ENCODE measurements at regions of chr1 and their contacts with region 1.

Region 1: DNA sequence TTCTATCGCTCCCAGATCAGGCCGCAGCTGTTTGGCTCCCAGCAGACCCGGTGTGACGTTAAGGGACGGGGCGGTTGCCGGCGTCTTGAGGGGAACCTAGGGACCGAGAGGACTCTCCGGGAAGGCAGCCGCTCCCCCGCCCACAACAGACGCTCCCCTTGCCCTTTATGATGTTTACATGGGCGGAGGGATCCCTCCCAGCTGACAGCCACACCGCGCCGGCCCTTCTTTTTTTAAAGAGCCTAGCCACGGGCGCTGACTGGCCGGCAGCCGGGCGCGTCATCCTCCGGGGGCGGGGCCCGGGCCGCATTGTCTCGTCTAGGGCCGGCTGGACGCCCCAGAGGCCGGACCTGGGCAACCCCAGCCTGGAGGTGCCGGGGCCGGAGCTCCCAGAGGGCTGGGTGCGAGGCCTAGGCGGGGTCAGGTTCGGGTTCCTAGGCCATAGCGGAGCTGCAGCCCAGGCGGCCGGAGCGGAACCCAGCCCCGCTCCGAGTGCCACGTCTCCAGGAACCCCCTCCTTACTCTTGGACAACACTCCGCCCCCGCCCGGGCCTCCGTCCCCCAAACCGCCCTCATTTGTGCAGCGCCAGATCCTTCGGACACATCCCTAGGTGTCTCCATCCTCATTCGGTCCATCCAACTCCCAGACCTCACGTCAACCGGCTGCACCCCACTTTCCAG is at the start of gene PCAT6:
- DNase-seq: peak; percentile 99
- H3K4me3 Mint-ChIP-seq: peak within 1 kb of the TSS; percentile 81
- H3K27ac Mint-ChIP-seq: peak within 1 kb of the TSS; percentile 65
- H3K4me1 Mint-ChIP-seq: peaks cover 33% of the 10 kb centered on the region
- H3K27me3 Mint-ChIP-seq: no peaks in the 10 kb centered on the region
- CTCF ChIP-seq: no peak
- total RNA-seq, gene PCAT6: 3.2 and 5.4 TPM in 2 replicates

Region 2: GRCh38 chr1:202781180-202781579 is 29.6 kb before region 1 on chr1:
- CTCF ChIA-PET with region 1: interaction called, 3 read pairs
- POLR2A ChIA-PET with region 1: interaction called, 39 read pairs
- intact Hi-C with region 1: no loop called
- DNase-seq: no peak
- H3K4me3 Mint-ChIP-seq: no peak overlapping the region
- H3K27ac Mint-ChIP-seq: no peak overlapping the region
- H3K4me1 Mint-ChIP-seq: peaks cover 6% of the 10 kb centered on the region
- H3K27me3 Mint-ChIP-seq: no peaks in the 10 kb centered on the region
- CTCF ChIP-seq: no peak

Region 3: GRCh38 chr1:202821452-202821851 is 10.7 kb after region 1 on chr1:
- CTCF ChIA-PET with region 1: interaction called, 3 read pairs
- POLR2A ChIA-PET with region 1: interaction called, 27 read pairs
- intact Hi-C with region 1: no loop called
- DNase-seq: no peak
- H3K4me3 Mint-ChIP-seq: no peak overlapping the region
- H3K27ac Mint-ChIP-seq: no peak overlapping the region
- H3K4me1 Mint-ChIP-seq: peaks cover 6% of the 10 kb centered on the region
- H3K27me3 Mint-ChIP-seq: peaks cover 40% of the 10 kb centered on the region
- CTCF ChIP-seq: no peak

Region 4: GRCh38 chr1:202843081-202843480 is 32.3 kb after region 1 on chr1:
- CTCF ChIA-PET with region 1: interaction called, 4 read pairs
- POLR2A ChIA-PET with region 1: interaction called, 11 read pairs
- intact Hi-C with region 1: no loop called
- DNase-seq: no peak
- H3K4me3 Mint-ChIP-seq: no peak overlapping the region
- H3K27ac Mint-ChIP-seq: no peak overlapping the region
- H3K4me1 Mint-ChIP-seq: no peaks in the 10 kb centered on the region
- H3K27me3 Mint-ChIP-seq: no peaks in the 10 kb centered on the region
- CTCF ChIP-seq: no peak

Region 5: DNA sequence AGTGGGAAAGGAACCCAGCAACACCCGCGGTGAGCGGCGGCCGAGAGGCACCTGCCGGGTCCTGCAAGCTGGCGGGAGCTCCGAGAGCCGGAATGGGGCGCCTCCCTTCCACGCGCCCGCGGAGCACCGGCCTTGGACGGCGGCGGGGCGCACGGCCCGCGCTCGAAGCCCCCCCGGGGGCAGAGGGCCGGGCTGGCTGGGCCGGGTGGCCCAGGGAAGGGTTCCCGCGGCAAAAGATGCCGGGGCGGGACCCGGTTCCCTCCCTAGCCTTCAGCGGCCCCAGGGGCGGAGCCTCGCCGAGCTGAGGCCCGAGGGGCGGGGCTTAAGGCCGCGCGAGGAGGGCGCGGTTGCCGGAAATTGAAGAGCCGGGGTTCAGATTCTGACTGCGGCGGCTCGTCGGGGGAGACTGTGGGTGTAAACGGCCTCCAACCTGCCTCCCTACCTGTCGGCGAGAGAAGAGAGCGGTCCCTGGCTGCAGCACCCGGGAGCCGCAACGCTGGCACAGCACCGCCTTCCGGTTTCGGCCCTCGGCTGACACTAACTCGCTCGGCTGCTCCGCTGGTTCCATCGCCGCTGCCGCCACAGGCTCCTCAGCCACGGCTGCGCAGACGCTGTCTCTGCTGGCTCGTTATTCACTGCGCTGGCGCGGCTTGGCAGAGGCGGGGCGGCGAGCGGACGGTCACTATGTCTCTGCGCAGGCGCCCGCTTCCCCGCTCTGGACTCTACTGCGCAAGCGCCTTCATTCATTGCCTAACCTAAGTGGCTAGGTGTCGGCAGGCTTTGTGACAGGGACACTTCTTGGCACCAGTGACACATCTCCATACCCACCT is 78.0 kb after region 1 on chr1 and contains the start of gene RABIF:
- CTCF ChIA-PET with region 1: no interaction called
- POLR2A ChIA-PET with region 1: interaction called, 38 read pairs
- intact Hi-C with region 1: loop called (anchors 1 kb)
- DNase-seq: peak; percentile 99
- H3K4me3 Mint-ChIP-seq: peak within 1 kb of the TSS; percentile 97
- H3K27ac Mint-ChIP-seq: peak within 1 kb of the TSS; percentile 88
- H3K4me1 Mint-ChIP-seq: peaks cover 7% of the 10 kb centered on the region
- H3K27me3 Mint-ChIP-seq: no peaks in the 10 kb centered on the region
- CTCF ChIP-seq: no peak
- total RNA-seq, gene RABIF: 11.2 and 13.5 TPM in 2 replicates

Region 6: GRCh38 chr1:203084588-203085502 is 274.1 kb after region 1 on chr1:
- CTCF ChIA-PET with region 1: no interaction called
- POLR2A ChIA-PET with region 1: no interaction called
- intact Hi-C with region 1: no loop called
- DNase-seq: peak; percentile 41
- H3K4me3 Mint-ChIP-seq: no peak overlapping the region
- H3K27ac Mint-ChIP-seq: no peak overlapping the region
- H3K4me1 Mint-ChIP-seq: no peaks in the 10 kb centered on the region
- H3K27me3 Mint-ChIP-seq: peaks cover 21% of the 10 kb centered on the region
- CTCF ChIP-seq: peak; percentile 86

Measured in MCF 10A (cell line).